ENCODE measurements at regions of chr1 and their contacts with region 1.

Region 1: DNA sequence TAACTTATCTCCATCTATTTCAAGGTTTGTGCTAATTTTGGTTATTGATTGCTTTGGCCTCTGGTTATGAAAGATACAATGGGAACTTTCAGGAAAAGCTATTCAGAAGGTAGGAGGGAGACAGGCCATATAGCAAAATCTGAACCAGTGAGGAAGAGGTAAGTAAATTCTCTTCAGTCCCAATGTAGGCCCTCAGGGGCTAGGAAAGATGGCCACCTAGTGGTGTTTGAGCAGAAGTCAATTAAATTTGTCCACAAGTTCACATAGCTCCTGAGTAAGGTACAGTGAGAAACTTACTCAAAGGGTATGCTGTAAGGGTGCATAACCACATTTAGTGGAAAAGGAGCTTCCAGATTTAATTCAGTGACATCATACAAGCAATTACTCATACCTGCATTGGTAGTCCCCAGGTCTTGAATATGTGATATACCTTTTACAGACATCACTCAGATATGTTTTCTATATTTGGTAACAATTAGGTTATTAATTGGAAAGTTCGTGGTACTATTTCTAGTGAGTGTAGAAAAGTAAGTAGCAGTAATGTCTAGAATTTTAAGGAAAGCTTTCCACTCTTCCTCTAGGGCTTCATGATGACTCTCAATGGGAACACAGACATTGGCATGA is 21.4 kb upstream of the FMO1 start:
- DNase-seq: peak; percentile 73
- H3K4me3 ChIP-seq: no peak overlapping the region
- H3K27ac ChIP-seq: no peak overlapping the region
- H3K4me1 ChIP-seq: peaks cover 7% of the 10 kb centered on the region
- CTCF ChIP-seq: peak; percentile 93

Region 2: GRCh38 chr1:170685166-170685565 is 541.7 kb before region 1 on chr1:
- CTCF ChIA-PET with region 1: no interaction called
- POLR2A ChIA-PET with region 1: no interaction called
- intact Hi-C with region 1: loop called (anchors 10 kb)
- DNase-seq: no peak
- H3K4me3 ChIP-seq: no peak overlapping the region
- H3K27ac ChIP-seq: no peak overlapping the region
- H3K4me1 ChIP-seq: no peaks in the 10 kb centered on the region
- CTCF ChIP-seq: no peak

Region 3: GRCh38 chr1:170967042-170967910 is 259.6 kb before region 1 on chr1:
- CTCF ChIA-PET with region 1: no interaction called
- POLR2A ChIA-PET with region 1: interaction called, 3 read pairs
- intact Hi-C with region 1: loop called (anchors 5 kb)
- DNase-seq: peak; percentile 49
- H3K4me3 ChIP-seq: no peak overlapping the region
- H3K27ac ChIP-seq: no peak overlapping the region
- H3K4me1 ChIP-seq: no peaks in the 10 kb centered on the region
- CTCF ChIP-seq: peak; percentile 85

Region 4: DNA sequence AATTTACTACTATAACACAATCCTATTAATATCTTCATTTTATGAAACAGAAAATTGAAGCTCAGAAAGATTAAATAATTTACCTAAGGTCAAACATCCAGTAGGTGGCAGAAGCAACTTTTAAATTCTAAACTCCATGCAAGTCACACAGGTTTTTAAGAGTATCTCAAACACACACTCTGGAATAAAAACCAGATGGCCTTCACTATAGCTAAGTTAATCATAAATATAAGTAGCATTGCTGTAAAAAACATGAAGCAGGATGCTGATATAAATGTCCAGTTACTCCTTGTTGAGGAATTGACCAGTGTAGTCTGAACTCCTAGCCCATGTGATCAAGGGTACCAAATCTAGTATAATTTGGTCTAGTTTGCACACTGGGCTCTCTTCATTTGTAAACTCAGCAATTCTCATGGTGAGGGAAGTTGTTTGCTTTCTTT is 145.5 kb before region 1 on chr1:
- CTCF ChIA-PET with region 1: interaction called, 3 read pairs
- POLR2A ChIA-PET with region 1: interaction called, 3 read pairs
- intact Hi-C with region 1: loop called (anchors 5 kb)
- DNase-seq: peak; percentile 36
- H3K4me3 ChIP-seq: no peak overlapping the region
- H3K27ac ChIP-seq: no peak overlapping the region
- H3K4me1 ChIP-seq: no peaks in the 10 kb centered on the region
- CTCF ChIP-seq: peak; percentile 78

Measured in OCI-LY7 (cell line).